Mammary epithelial cell (primary cell): ENCODE measurements at regions of chr1 and their contacts with region 1.

Region 1: GRCh38 chr1:117398957-117399356 is 31.7 kb downstream of the MAN1A2 start:
- DNase-seq: no peak
- H3K4me3 ChIP-seq: no peak overlapping the region
- H3K27ac ChIP-seq: no peak overlapping the region
- H3K4me1 ChIP-seq: no peaks in the 10 kb centered on the region
- H3K27me3 ChIP-seq: no peaks in the 10 kb centered on the region
- CTCF ChIP-seq: no peak

Region 2: GRCh38 chr1:117026361-117026760 is 372.6 kb before region 1 on chr1:
- CTCF ChIA-PET with region 1: no interaction called
- dilution Hi-C with region 1: no loop called
- in situ Hi-C with region 1: no loop called
- intact Hi-C with region 1: no loop called
- DNase-seq: no peak
- H3K4me3 ChIP-seq: no peak overlapping the region
- H3K27ac ChIP-seq: no peak overlapping the region
- H3K4me1 ChIP-seq: no peaks in the 10 kb centered on the region
- H3K27me3 ChIP-seq: no peaks in the 10 kb centered on the region
- CTCF ChIP-seq: no peak

Region 3: GRCh38 chr1:117210831-117211261 is 188.1 kb before region 1 on chr1 and contains the start of gene VTCN1:
- CTCF ChIA-PET with region 1: no interaction called
- dilution Hi-C with region 1: no loop called
- in situ Hi-C with region 1: no loop called
- intact Hi-C with region 1: no loop called
- DNase-seq: peak; percentile 86
- H3K4me3 ChIP-seq: no peak within 1 kb of the TSS
- H3K27ac ChIP-seq: no peak within 1 kb of the TSS
- H3K4me1 ChIP-seq: peaks cover 9% of the 10 kb centered on the region
- H3K27me3 ChIP-seq: peaks cover 3% of the 10 kb centered on the region
- CTCF ChIP-seq: no peak
- total RNA-seq, gene VTCN1: 4.2 TPM in 1 of 2 donors, not detected in the other

Region 4: DNA sequence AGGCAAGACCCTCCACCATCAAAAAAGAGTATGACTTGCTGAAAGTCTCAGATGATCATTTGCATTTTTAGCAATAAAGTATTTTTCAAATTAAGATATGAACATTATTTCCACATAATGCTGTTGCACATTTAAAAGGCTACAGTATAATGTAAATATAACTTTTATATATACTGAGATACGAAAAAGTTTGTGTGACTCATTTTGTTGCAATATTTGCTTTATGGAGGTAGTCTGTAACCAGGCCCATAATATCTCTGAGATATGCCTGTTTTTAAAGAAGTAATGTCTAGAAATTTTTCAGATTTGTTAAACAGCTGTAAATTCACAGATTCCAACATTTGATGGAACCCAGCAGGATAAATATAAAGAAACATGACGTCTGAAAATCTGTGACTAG is 55.0 kb after region 1 on chr1:
- CTCF ChIA-PET with region 1: no interaction called
- dilution Hi-C with region 1: loop called (anchors 5 kb)
- in situ Hi-C with region 1: no loop called
- intact Hi-C with region 1: no loop called
- DNase-seq: no peak
- H3K4me3 ChIP-seq: no peak overlapping the region
- H3K27ac ChIP-seq: no peak overlapping the region
- H3K4me1 ChIP-seq: no peaks in the 10 kb centered on the region
- H3K27me3 ChIP-seq: no peaks in the 10 kb centered on the region
- CTCF ChIP-seq: no peak